ENCODE measurements at regions of chr12 and their contacts with region 1.

Region 1: DNA sequence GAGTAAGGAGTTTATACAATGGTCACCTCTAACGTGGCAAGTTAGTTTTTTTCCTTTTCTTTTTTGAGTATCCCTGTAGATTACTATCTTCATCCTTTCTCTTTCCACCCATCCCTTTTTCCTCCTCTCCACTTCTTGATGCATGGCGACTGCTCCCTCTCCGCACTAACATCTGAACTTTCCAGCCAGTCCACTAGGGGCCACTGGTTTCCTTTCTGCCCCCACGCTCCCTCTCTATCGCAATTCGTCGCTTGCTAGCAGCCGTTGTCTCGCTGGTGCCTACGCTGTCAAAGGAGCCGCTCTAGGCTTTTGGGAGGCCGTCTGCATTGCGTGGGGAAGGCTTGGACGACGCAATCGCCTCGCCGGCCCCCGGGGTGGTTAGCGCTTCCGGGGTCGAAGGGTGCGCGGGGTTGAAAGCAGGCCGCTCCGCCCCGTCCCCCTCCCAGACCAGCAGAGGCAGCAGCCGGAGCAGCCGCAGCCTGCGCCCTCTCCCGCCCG is at the start of gene PCBP2:
- DNase-seq: peak; percentile 95 to 99 (median 96)
- ATAC-seq: peak; percentile 94
- H3K4me3 ChIP-seq: peak within 1 kb of the TSS; percentile 98
- H3K27ac ChIP-seq: peak within 1 kb of the TSS; percentile 98
- H3K4me1 ChIP-seq: peaks cover 0 to 17% of the 10 kb centered on the region in 2 experiments; a peak in 3 of 5 replicates
- H3K27me3 ChIP-seq: no peaks in the 10 kb centered on the region
- CTCF ChIP-seq: peak; percentile 82 to 95 (median 93)
- EP300 ChIP-seq: peak; percentile 54
- POLR2A ChIP-seq: peak; percentile 67; the same call in 1 of the 2 replicates
- RAD21 ChIP-seq: peak in 1 of 2 experiments; percentile 18; a peak in 1 of 4 replicates
- polyA plus RNA-seq, gene PCBP2: 254 to 328 TPM

Region 2: GRCh38 chr12:53352331-53353256 is 99.1 kb before region 1 on chr12:
- CTCF ChIA-PET with region 1: interaction called, 7 read pairs
- POLR2A ChIA-PET with region 1: interaction called, 7 read pairs
- in situ Hi-C with region 1: no loop called
- intact Hi-C with region 1: loop called (anchors 1 kb)
- DNase-seq: peak; percentile 71 to 93 (median 74)
- ATAC-seq: peak; percentile 95
- H3K4me3 ChIP-seq: no peak overlapping the region
- H3K27ac ChIP-seq: no peak overlapping the region
- H3K4me1 ChIP-seq: peaks cover 12 to 17% of the 10 kb centered on the region in 2 experiments
- H3K27me3 ChIP-seq: no peaks in the 10 kb centered on the region
- CTCF ChIP-seq: peak; percentile 91 to 96 (median 92)
- EP300 ChIP-seq: no peak
- POLR2A ChIP-seq: no peak
- RAD21 ChIP-seq: peak; percentile 98 to 99

Region 3: DNA sequence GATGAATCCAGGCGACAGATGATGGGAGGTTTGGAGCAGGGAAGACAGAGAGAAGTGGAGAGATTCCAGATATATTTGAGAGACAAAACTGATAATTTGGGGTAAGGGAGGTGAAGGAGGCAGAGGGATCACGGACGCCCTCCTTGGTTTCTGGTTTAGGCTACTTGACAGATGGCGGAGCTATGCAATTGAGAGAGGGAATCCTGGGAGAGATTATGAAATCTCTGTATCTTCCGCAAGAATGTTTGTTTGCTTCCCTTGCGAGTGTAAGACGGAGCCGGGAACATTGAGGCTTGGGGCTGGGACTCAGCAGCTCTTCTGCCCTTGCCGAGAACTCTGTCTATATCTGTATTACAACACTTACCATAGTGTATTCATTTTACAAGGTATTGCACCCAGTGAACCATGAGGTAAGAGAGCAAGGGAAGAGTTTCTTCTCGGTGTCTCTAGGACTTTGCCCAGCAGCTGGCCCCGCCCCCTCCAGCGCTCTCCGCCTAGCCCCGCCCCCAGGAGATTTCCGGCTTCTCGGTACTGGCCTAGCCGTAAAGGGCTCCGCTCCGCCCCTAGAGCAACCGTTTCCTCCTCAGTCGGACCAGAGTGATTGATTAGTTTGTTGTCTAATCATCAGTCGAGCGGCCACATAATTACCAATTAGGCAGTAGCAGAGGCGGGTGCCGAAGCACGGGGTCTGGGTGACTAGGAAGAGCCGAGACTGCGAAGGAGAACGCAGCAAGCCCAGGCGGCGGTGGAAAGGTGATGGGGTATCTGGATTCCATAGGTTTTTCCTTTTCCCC is 10.5 kb before region 1 on chr12 and contains the start of gene PRR13:
- CTCF ChIA-PET with region 1: no interaction called
- POLR2A ChIA-PET with region 1: interaction called, 11 read pairs
- in situ Hi-C with region 1: no loop called
- intact Hi-C with region 1: no loop called
- DNase-seq: peak; percentile 91 to 99 (median 96)
- ATAC-seq: peak; percentile 97
- H3K4me3 ChIP-seq: peak within 1 kb of the TSS; percentile 57
- H3K27ac ChIP-seq: peak within 1 kb of the TSS; percentile 84
- H3K4me1 ChIP-seq: peaks cover 20 to 41% of the 10 kb centered on the region in 2 experiments; a peak in 4 of 5 replicates
- H3K27me3 ChIP-seq: no peaks in the 10 kb centered on the region
- CTCF ChIP-seq: no peak
- EP300 ChIP-seq: peak; percentile 33
- POLR2A ChIP-seq: peak; percentile 98
- RAD21 ChIP-seq: no peak
- polyA plus RNA-seq, gene PRR13: 570 to 835 TPM

Region 4: GRCh38 chr12:53465679-53466078 is 14.0 kb after region 1 on chr12:
- CTCF ChIA-PET with region 1: no interaction called
- POLR2A ChIA-PET with region 1: interaction called, 14 read pairs
- in situ Hi-C with region 1: no loop called
- intact Hi-C with region 1: no loop called
- DNase-seq: no peak
- ATAC-seq: no peak
- H3K4me3 ChIP-seq: no peak overlapping the region
- H3K27ac ChIP-seq: no peak overlapping the region
- H3K4me1 ChIP-seq: peaks cover 0 to 3% of the 10 kb centered on the region in 2 experiments; a peak in 1 of 5 replicates
- H3K27me3 ChIP-seq: no peaks in the 10 kb centered on the region
- CTCF ChIP-seq: no peak
- EP300 ChIP-seq: no peak
- POLR2A ChIP-seq: no peak
- RAD21 ChIP-seq: no peak

Region 5: GRCh38 chr12:53476769-53477209 is 25.1 kb after region 1 on chr12:
- CTCF ChIA-PET with region 1: no interaction called
- POLR2A ChIA-PET with region 1: interaction called, 39 read pairs
- in situ Hi-C with region 1: no loop called
- intact Hi-C with region 1: no loop called
- DNase-seq: peak in 3 of 4 experiments; percentile 26 to 52 (median 43)
- ATAC-seq: peak; percentile 60
- H3K4me3 ChIP-seq: no peak overlapping the region
- H3K27ac ChIP-seq: no peak overlapping the region
- H3K4me1 ChIP-seq: peaks cover 0 to 5% of the 10 kb centered on the region in 2 experiments; a peak in 3 of 5 replicates
- H3K27me3 ChIP-seq: no peaks in the 10 kb centered on the region
- CTCF ChIP-seq: peak; percentile 30 to 52 (median 35); a peak in 3 of 6 replicates
- EP300 ChIP-seq: no peak
- POLR2A ChIP-seq: peak; percentile 41; the same call in 1 of the 2 replicates
- RAD21 ChIP-seq: no peak

Region 6: GRCh38 chr12:53481957-53482586 is 30.4 kb after region 1 on chr12:
- CTCF ChIA-PET with region 1: no interaction called
- POLR2A ChIA-PET with region 1: interaction called, 39 read pairs
- in situ Hi-C with region 1: no loop called
- intact Hi-C with region 1: no loop called
- DNase-seq: peak in 1 of 4 experiments; percentile 37
- ATAC-seq: peak; percentile 61
- H3K4me3 ChIP-seq: no peak overlapping the region
- H3K27ac ChIP-seq: no peak overlapping the region
- H3K4me1 ChIP-seq: peaks cover 0 to 13% of the 10 kb centered on the region in 2 experiments; a peak in 3 of 5 replicates
- H3K27me3 ChIP-seq: no peaks in the 10 kb centered on the region
- CTCF ChIP-seq: peak; percentile 22 to 37 (median 31); a peak in 5 of 6 replicates
- EP300 ChIP-seq: no peak
- POLR2A ChIP-seq: peak; percentile 59
- RAD21 ChIP-seq: no peak

Region 7: GRCh38 chr12:53500776-53501614 is 49.3 kb after region 1 on chr12 and contains the start of gene TARBP2:
- CTCF ChIA-PET with region 1: no interaction called
- POLR2A ChIA-PET with region 1: interaction called, 10 read pairs
- in situ Hi-C with region 1: no loop called
- intact Hi-C with region 1: no loop called
- DNase-seq: peak; percentile 85 to 98 (median 88)
- ATAC-seq: peak; percentile 86
- H3K4me3 ChIP-seq: peak within 1 kb of the TSS; percentile 79
- H3K27ac ChIP-seq: peak within 1 kb of the TSS; percentile 97
- H3K4me1 ChIP-seq: peaks cover 33 to 47% of the 10 kb centered on the region in 2 experiments; a peak in 4 of 5 replicates
- H3K27me3 ChIP-seq: no peaks in the 10 kb centered on the region
- CTCF ChIP-seq: no peak
- EP300 ChIP-seq: no peak
- POLR2A ChIP-seq: peak; percentile 96
- RAD21 ChIP-seq: no peak
- polyA plus RNA-seq, gene TARBP2: 5.6 to 16.6 TPM